Posterior cingulate gyrus (tissue), 11 donors: ENCODE measurements at regions of chr1 and their contacts with region 1.

Region 1: DNA sequence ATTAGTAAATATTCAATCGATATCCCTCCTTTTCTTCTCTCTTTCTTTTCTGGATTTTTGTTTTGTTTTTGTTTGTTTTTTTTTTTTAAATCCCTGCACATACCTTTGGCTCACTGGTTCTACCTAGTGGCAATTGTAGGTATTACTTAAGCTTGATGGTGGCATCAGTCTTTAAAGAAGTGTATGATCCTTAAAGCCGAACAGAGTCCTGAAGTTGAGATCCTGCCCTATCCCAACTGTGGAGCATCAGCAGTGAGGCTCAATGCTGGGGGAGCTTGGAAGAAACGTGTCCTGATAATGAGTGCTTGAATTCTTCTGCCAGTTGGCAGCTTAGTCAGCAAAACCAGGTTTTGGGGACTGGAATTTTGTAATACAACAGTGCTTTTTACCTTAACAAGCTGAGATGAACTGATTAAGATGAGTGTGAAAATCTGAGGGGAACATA is 60.8 kb downstream of the FASLG start:
- DNase-seq: no peak

Region 2: DNA sequence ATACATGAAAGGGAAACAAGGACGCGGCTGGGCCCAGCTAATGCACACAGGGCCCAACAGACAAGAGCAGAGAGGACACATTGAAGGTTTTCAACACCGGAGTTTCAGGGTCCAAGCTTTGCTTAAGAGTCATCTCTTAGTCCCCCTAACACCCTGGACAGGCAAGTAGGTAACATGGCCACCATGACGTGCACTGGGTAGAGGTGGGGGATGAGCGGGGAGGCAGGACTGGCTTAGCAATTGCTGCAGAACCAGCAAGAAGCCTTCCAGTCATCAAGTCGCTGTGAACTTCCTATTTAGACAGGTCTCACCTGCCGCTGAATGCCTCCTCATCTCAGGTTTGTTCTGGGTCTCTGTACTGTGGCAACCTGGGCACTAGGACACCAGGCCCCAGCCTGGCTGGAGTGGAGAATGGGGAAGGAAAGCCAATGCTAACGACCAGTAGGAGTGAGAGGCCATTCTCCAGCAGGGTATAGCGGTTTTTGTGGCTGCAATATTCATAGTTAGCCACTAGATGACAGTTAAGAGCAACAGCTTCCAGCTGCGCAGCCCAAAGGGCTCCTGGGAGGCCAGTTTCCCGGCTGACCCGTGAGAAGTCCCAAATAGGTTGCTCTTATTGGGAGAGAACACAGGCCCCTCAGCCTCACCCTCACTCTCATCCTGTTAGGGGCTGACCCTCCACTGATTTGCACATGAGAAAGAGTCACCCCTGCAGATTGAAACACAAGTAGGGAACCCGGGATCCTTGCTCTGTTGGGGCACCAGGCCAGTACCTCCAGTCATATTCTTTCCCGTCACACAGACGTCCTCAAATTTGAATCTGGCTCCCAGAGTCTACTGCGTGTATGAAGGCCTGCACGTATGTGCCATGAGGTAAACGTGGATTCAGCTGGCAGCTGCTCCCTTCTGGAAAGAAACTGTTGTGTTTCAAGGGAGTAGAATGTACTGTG is 269.9 kb before region 1 on chr1:
- intact Hi-C with region 1: loop called (anchors 5 kb)
- DNase-seq: peak in 5 of 10 donors; percentile 8 to 85 (median 30)

Region 3: DNA sequence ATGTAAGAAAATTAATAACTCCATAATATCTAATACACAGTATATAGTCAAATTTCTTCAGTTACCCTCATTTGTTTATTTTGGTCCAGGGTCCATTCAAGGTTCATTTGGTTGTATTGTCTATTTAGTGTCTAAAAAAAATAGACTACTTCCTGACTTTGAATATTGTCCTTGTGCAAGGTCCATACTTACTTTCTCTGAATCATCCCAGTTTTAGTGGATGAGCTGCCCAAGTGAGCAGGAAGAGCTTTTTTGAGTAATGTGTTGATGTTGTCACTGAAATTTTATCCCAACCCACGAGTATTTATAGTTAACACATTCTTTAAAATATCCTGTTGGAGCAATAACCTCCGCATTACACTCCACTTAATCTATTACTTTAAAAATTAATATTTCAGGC is 106.4 kb before region 1 on chr1:
- intact Hi-C with region 1: loop called (anchors 10 kb)
- DNase-seq: no peak

Region 4: DNA sequence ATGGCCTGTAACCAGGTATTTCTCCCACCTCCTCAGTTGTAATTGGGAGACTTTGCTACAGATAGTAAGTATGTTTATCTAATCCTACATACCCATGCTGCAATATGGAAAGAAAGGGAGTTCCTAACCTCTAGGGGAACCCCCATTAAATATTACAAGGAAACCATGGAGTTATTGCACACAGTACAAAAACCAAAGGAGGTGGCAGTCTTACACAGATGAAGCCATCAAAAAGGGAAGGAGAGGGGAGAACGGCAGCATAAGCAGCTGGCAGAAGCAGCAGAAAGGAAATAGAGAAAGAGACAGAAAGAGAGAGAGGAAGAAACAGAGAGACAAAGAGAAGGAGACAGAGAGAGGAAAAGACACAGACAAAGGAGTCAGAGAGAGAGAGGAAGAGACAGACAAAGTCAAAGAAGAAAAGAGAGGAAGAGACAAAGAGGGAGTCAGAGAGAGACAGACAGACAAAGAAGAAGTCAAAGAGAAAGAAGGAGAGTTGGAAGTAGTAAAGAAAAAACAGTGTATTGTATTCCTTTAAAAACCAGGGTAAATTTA is 82.1 kb after region 1 on chr1:
- intact Hi-C with region 1: no loop called
- DNase-seq: no peak